Activated naive CD4-positive, alpha-beta T cell treated with anti-CD3 and anti-CD28 coated beads, Interleukin-2, amount 10 ng/mL, durations not matched to agents 7 days and 5 days (primary cell): ENCODE measurements at regions of chr22 and their contacts with region 1.

Region 1: DNA sequence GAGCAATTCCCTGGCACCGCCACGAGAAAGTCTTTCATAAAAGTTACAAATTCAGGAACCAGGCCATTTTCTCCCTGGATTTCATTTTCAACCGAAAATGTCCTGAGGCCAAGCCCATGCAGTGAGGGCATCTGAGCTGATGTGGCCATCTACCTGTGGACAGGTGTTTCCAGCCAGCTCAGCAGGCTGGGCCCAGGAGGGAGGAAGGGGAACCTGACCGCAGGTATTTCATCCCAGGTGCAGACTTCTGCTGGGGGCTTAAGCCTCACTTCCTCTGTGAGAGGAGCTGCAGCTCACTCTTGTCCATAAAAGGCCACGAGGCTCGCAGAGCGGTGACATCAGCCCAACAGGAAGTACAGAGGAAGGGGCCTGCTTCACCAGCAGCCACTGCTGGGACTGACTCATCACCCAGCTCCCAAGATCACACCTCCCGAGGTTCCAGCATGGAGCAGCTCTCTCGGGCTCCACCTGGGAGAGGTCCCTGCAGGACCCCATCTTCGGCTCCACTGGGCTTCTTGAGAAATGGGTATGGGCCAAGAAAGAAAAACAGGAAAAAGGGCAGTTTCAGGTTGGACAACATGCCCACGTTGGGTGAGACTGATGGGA is 56.4 kb downstream of the MYH9 start:
- DNase-seq: peak; percentile 88
- H3K4me3 Mint-ChIP-seq: peak overlapping the region; percentile 87
- H3K27ac Mint-ChIP-seq: peak overlapping the region; percentile 99
- H3K4me1 Mint-ChIP-seq: peaks cover 99% of the 10 kb centered on the region
- H3K27me3 Mint-ChIP-seq: no peaks in the 10 kb centered on the region

Region 2: GRCh38 chr22:36301384-36301828 is 30.0 kb before region 1 on chr22:
- CTCF ChIA-PET with region 1: interaction called, 22 read pairs
- DNase-seq: peak; percentile 87
- H3K4me3 Mint-ChIP-seq: no peak overlapping the region
- H3K27ac Mint-ChIP-seq: peak overlapping the region; percentile 74
- H3K4me1 Mint-ChIP-seq: peaks cover 12% of the 10 kb centered on the region
- H3K27me3 Mint-ChIP-seq: peaks cover 3% of the 10 kb centered on the region

Region 3: DNA sequence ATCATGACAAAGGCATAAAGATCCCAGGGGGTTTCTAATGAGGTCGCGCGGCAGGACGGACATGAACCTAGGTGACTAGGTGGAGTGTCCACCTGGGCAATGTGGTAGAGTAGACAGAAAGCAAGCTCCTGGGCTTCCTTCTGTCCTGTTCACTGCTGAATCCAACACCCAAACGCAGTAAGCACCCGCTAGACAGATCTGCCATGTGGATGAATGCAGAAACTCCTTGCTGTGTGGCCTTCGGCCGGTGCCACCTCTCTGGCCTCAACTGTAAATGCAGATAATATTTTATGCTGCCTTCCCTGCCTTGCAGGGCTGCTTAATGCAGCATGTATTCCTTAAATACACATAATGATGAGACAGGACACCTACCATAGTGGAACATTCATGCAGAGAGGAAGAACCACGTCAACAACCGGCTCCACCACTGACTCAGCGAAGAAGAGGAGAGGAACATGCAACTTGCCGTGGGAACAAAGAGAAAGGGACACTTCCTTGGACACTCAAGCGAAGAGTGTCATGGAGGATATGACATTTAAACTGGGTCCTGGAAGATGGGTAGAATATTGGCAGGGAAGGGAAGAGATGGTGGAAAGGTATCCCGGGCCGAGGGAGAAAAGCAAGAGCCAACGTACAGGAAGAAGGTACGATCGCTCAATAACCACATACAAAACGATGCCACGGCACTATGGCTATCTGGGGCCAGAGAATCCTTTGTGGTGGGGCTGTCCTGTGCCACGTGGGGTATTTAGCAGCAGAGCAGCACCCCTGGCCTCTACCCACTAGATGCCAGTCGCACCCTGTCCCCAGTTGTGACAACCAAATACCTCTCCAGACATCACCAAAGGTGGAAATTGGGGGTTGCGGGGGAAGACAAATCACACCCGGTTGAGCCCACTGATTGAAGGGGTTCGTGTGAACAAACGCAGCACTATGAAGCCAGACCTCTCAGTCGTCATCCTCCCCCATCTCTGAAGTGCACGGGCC is 25.6 kb after region 1 on chr22:
- CTCF ChIA-PET with region 1: interaction called, 10 read pairs
- DNase-seq: no peak
- H3K4me3 Mint-ChIP-seq: peak overlapping the region; percentile 56
- H3K27ac Mint-ChIP-seq: peak overlapping the region; percentile 84
- H3K4me1 Mint-ChIP-seq: peaks cover 98% of the 10 kb centered on the region
- H3K27me3 Mint-ChIP-seq: no peaks in the 10 kb centered on the region

Region 4: GRCh38 chr22:36379593-36380361 is 48.4 kb after region 1 on chr22:
- CTCF ChIA-PET with region 1: interaction called, 16 read pairs
- DNase-seq: peak; percentile 77
- H3K4me3 Mint-ChIP-seq: peak overlapping the region; percentile 80
- H3K27ac Mint-ChIP-seq: peak overlapping the region; percentile 99
- H3K4me1 Mint-ChIP-seq: peaks cover 95% of the 10 kb centered on the region
- H3K27me3 Mint-ChIP-seq: no peaks in the 10 kb centered on the region

Region 5: DNA sequence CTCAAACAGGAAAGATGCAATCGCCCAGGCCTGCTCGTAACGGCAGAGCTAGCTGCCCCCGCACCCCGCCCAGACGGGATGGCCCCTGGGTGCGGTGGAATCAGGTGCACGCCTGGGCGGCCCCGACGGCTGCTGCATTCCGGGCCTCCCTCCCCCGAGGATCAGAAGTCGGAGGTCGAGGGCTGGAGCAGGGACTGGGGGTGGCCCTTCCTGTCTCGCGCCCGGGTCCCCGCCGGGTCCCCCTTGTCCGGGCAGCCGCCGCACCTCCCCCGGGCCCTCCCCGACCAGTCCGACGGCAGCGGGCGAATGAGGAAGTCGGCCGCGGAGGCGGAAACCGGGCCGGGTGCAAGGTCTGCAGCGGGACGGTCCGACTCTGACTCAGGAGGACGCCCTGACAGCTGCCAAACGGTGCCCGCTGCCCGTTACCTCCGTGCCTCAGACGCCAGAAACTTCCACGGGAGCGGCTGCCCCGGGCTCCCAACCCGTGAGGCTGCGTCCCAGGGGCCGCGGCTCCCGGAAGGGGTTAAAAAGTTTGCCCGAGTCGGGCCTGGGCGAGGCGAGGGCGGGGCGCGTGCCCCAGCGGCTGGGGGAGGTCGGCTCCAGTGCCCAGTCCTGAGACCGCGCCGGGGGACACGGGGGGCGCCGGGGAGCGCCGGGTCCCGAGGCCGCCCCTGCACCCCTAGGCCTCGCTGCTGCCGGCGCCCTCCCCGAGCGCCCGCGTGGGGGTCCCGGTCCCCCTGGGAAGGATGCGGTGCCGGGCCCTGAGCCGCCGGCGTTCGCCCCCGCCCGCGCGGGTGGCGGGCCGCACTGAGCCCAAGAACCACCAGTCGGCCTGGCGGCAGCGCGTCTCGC is 55.7 kb after region 1 on chr22:
- CTCF ChIA-PET with region 1: interaction called, 15 read pairs
- DNase-seq: peak; percentile 76
- H3K4me3 Mint-ChIP-seq: peak overlapping the region; percentile 74
- H3K27ac Mint-ChIP-seq: peak overlapping the region; percentile 94
- H3K4me1 Mint-ChIP-seq: peaks cover 61% of the 10 kb centered on the region
- H3K27me3 Mint-ChIP-seq: no peaks in the 10 kb centered on the region